Common myeloid progenitor, CD34-positive (primary cell): ENCODE measurements at regions of chr5 and their contacts with region 1.

Region 1: DNA sequence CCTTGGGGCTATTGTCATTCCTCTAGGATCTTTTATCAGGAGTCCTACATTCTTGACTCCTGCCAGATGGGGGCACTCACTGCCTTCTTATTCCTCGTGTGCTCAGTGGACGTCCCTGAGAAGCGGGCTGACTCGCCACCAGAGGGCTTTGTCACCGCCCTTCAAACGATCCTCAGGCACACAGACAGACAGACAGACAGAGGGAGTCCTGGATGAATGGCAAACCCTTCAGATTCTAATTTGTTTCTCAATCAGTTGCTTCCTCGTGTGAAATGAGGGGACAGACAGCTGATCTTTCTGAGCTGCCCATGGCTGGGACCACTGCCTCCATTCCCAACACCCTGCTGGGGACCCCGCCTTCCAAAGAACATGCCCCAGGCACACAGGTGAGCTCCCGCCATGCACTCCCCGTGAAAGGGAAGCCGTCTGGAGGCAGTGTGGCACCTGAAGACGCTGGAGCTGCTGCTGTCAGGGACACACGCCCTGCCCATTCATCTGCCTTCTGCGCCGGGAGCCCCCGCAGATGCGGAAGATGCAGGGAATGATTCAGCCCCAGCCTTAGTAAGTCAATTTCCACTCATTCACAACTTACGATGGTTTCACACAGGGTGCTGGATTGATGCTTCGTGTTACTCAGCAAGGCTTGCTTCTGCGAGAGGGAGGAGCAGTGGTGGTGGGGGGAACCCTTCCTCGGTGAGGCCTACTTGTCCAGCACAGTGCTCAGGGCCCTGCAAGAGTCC is 24.9 kb upstream of the SH3PXD2B start:
- DNase-seq: peak; percentile 90 to 94 (median 92)
- H3K4me3 ChIP-seq: no peak overlapping the region
- H3K27ac ChIP-seq: no peak overlapping the region
- H3K4me1 ChIP-seq: no peaks in the 10 kb centered on the region
- H3K27me3 ChIP-seq: peaks cover 0 to 2% (median 0%) of the 10 kb centered on the region in 5 experiments

Region 2: GRCh38 chr5:172707285-172708182 is 228.3 kb after region 1 on chr5:
- CTCF ChIA-PET with region 1: interaction called, 207 read pairs
- POLR2A ChIA-PET with region 1: no interaction called
- DNase-seq: peak in 2 of 3 donors; percentile 45 to 47
- H3K4me3 ChIP-seq: no peak overlapping the region
- H3K27ac ChIP-seq: no peak overlapping the region
- H3K4me1 ChIP-seq: peaks cover 0 to 5% (median 2%) of the 10 kb centered on the region in 4 experiments
- H3K27me3 ChIP-seq: no peaks in the 10 kb centered on the region